Testis (tissue), 5 donors: ENCODE measurements at regions of chr12 and their contacts with region 1.

Region 1: DNA sequence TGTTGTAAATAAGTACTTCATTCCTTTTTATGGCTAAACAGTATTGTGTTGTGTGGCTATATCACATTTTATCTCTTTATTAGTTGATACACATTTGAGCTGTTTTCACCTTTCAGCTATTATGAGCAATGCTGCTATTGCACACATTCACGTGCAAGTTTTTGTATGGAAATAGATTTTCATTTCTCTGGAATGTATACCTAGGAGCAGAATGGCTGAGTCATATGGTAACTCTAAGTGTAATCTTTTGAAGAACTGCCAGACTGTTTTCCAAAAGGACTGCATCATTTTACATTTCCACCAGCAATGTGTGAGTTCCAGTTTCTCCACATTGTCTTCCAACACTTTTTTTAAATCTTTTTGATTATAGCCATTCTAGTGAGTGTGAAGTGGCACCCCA is 134.0 kb downstream of the SRGAP1 start:
- DNase-seq: no peak
- H3K4me3 ChIP-seq: no peak overlapping the region
- H3K27ac ChIP-seq: no peak overlapping the region
- H3K4me1 ChIP-seq: peaks cover 11% of the 10 kb centered on the region
- H3K27me3 ChIP-seq: no peaks in the 10 kb centered on the region
- CTCF ChIP-seq: no peak
- POLR2A ChIP-seq: no peak

Region 2: DNA sequence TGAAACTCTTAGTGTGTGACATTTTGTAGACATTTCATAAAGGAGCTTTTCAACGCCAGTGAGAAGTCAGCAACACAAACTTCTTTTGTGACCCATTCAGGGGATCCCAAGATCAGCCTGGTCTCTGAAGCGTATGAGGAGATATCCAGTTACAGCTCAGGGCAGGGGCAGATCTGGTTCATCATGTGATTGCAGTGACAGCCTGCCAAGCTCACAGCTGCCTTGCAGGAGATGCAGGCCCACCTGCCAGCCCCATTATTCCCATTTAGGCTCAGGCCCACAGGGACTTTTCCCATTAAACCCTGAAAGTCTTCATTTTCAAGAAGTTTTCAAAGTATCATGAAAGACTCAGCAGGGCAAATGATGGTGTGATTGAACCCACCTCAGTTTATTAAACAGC is 95.7 kb before region 1 on chr12:
- intact Hi-C with region 1: no loop called
- DNase-seq: no peak
- H3K4me3 ChIP-seq: no peak overlapping the region
- H3K27ac ChIP-seq: no peak overlapping the region
- H3K4me1 ChIP-seq: no peaks in the 10 kb centered on the region
- H3K27me3 ChIP-seq: no peaks in the 10 kb centered on the region
- CTCF ChIP-seq: no peak
- POLR2A ChIP-seq: no peak

Region 3: GRCh38 chr12:64088431-64089349 is 110.2 kb after region 1 on chr12:
- intact Hi-C with region 1: loop called (anchors 5 kb)
- DNase-seq: peak; percentile 89
- H3K4me3 ChIP-seq: no peak overlapping the region
- H3K27ac ChIP-seq: peak overlapping the region; percentile 72 to 78
- H3K4me1 ChIP-seq: peaks cover 27% of the 10 kb centered on the region
- H3K27me3 ChIP-seq: no peaks in the 10 kb centered on the region
- CTCF ChIP-seq: no peak
- POLR2A ChIP-seq: no peak

Region 4: GRCh38 chr12:64403707-64404469 is 425.4 kb after region 1 on chr12 and contains the start of gene XPOT:
- intact Hi-C with region 1: no loop called
- DNase-seq: peak; percentile 94
- H3K4me3 ChIP-seq: peak within 1 kb of the TSS; percentile 69 to 99
- H3K27ac ChIP-seq: peak within 1 kb of the TSS; percentile 97 to 98
- H3K4me1 ChIP-seq: peaks cover 5% of the 10 kb centered on the region
- H3K27me3 ChIP-seq: no peaks in the 10 kb centered on the region
- CTCF ChIP-seq: no peak
- POLR2A ChIP-seq: no peak
- total RNA-seq, gene XPOT: 43.5 to 46.8 TPM